AG04449 (cell line): ENCODE measurements at regions of chr14 and their contacts with region 1.

Region 1: GRCh38 chr14:89654998-89655397 is 238.0 kb upstream of the FOXN3 start:
- DNase-seq: no peak
- H3K4me3 ChIP-seq: no peak overlapping the region
- CTCF ChIP-seq: no peak

Region 2: GRCh38 chr14:89641495-89642175 is 13.4 kb before region 1 on chr14:
- CTCF ChIA-PET with region 1: interaction called, 10 read pairs
- POLR2A ChIA-PET with region 1: no interaction called
- DNase-seq: no peak
- H3K4me3 ChIP-seq: no peak overlapping the region
- CTCF ChIP-seq: no peak

Region 3: DNA sequence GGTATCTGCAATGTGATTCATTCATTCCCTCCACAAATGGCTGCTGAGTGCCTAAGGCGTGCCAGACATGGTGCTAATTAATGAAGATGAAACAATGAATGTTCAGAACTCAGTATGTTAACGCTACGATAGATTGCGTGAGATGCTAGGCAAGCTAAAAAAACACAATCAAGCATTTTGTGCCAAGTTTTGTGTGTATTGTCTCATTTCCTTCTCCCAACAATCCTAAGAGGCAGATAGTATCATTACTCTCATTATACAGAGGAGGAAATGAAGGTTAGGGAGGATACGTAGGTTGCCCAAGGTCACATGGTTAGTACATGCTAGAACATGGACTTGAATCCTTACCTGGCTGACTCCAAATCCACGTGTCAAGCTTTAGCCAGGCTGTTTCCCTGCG is 35.1 kb after region 1 on chr14:
- CTCF ChIA-PET with region 1: no interaction called
- POLR2A ChIA-PET with region 1: no interaction called
- DNase-seq: no peak
- H3K4me3 ChIP-seq: no peak overlapping the region
- CTCF ChIP-seq: no peak